ENCODE measurements at regions of chr7 and their contacts with region 1.

Region 1: DNA sequence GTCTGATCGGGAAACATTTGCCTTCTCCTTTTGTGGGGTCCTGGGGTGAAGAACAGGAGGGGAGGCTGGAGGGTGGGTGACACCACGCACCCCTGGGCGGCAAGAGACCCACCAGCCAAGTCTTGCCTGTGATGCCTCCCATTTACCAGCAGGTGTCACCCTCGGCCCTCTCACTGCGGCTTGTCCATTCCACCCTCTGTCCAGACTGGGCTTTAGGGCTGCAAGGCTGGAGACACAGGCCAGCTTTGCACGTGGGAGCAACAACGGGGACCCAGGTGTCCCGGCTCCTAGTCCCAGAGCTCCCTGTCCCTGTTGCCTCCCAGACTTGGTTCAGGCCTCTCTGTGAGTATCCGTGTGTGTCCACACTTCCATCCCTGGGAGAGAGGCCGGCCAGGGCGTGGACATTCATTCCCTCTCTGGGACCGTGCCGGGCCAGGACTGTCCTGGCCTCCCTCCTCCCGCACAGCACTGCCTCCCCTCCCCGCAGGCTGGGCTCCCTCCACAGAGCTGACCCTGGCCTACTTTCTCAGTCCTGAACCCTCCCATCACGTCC is 36.2 kb upstream of the GTF2IRD1 start:
- DNase-seq: peak; percentile 58
- ATAC-seq: peak; percentile 57
- H3K4me3 Mint-ChIP-seq: no peak overlapping the region
- H3K27ac Mint-ChIP-seq: no peak overlapping the region
- H3K4me1 Mint-ChIP-seq: no peaks in the 10 kb centered on the region
- H3K27me3 Mint-ChIP-seq: no peaks in the 10 kb centered on the region

Region 2: GRCh38 chr7:74275401-74275881 is 142.1 kb before region 1 on chr7:
- CTCF ChIA-PET with region 1: no interaction called
- DNase-seq: no peak
- ATAC-seq: no peak
- H3K4me3 Mint-ChIP-seq: no peak overlapping the region
- H3K27ac Mint-ChIP-seq: no peak overlapping the region
- H3K4me1 Mint-ChIP-seq: peaks cover 17% of the 10 kb centered on the region
- H3K27me3 Mint-ChIP-seq: peaks cover 5% of the 10 kb centered on the region

Region 3: DNA sequence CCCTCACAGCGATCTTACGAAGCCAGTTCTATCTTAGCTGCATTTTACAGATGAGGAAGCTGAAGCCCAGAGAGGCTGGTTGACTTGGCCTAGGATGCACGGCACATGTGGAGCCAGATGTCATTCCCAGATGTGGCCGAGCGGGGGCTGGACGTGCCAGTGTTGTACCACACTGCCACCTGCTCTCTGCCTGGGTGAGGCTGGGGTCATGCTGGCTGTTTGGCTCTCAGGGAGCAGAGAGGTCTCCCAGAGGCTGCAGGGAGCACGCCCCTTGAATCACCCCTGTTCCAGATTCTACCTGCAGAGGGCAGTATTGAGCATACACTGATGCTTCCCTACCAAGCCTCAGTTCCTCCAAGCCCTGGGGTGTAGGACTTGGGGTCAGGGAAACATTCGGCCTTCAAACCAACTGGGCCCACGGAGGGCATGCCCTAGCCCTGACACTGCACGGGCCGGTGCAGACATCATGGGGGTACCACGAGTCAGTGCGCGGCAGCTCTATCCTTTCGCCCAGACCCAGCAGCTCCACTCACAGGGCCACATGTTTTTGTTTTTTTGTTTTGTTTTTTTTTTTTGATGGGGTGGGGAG is 32.4 kb after region 1 on chr7:
- CTCF ChIA-PET with region 1: no interaction called
- DNase-seq: peak; percentile 71
- ATAC-seq: peak; percentile 17
- H3K4me3 Mint-ChIP-seq: no peak overlapping the region
- H3K27ac Mint-ChIP-seq: peak overlapping the region; percentile 24
- H3K4me1 Mint-ChIP-seq: peaks cover 13% of the 10 kb centered on the region
- H3K27me3 Mint-ChIP-seq: peaks cover 20% of the 10 kb centered on the region

Region 4: GRCh38 chr7:74567318-74567668 is 149.8 kb after region 1 on chr7:
- CTCF ChIA-PET with region 1: interaction called, 15 read pairs
- DNase-seq: no peak
- ATAC-seq: no peak
- H3K4me3 Mint-ChIP-seq: no peak overlapping the region
- H3K27ac Mint-ChIP-seq: no peak overlapping the region
- H3K4me1 Mint-ChIP-seq: peaks cover 4% of the 10 kb centered on the region
- H3K27me3 Mint-ChIP-seq: no peaks in the 10 kb centered on the region